Natural killer cell (primary cell): ENCODE measurements at regions of chr13 and their contacts with region 1.

Region 1: GRCh38 chr13:95676762-95677563 is at the start of gene DNAJC3:
- DNase-seq: peak; percentile 98 to 99
- ATAC-seq: peak; percentile 92 to 99 (median 93)
- H3K4me3 ChIP-seq: peak within 1 kb of the TSS; percentile 87
- H3K4me3 Mint-ChIP-seq: peak within 1 kb of the TSS; percentile 99
- H3K27ac ChIP-seq: peak within 1 kb of the TSS; percentile 83
- H3K27ac Mint-ChIP-seq: peak within 1 kb of the TSS; percentile 95 to 99
- H3K4me1 ChIP-seq: peaks cover 12% of the 10 kb centered on the region
- H3K4me1 Mint-ChIP-seq: peaks cover 39 to 59% of the 10 kb centered on the region in 2 donors
- H3K27me3 ChIP-seq: no peaks in the 10 kb centered on the region
- H3K27me3 Mint-ChIP-seq: no peaks in the 10 kb centered on the region
- CTCF ChIP-seq: no peak
- total RNA-seq, gene DNAJC3: 26.5 to 38.1 (median 29.0) TPM

Region 2: GRCh38 chr13:95714142-95714829 is 37.3 kb after region 1 on chr13:
- intact Hi-C with region 1: no loop called
- DNase-seq: no peak
- ATAC-seq: peak in 1 of 3 donors; percentile 37
- H3K4me3 ChIP-seq: no peak overlapping the region
- H3K4me3 Mint-ChIP-seq: no peak overlapping the region
- H3K27ac ChIP-seq: no peak overlapping the region
- H3K27ac Mint-ChIP-seq: no peak overlapping the region
- H3K4me1 ChIP-seq: no peaks in the 10 kb centered on the region
- H3K4me1 Mint-ChIP-seq: peaks cover 6 to 20% of the 10 kb centered on the region in 2 donors
- H3K27me3 ChIP-seq: no peaks in the 10 kb centered on the region
- H3K27me3 Mint-ChIP-seq: no peaks in the 10 kb centered on the region
- CTCF ChIP-seq: no peak

Region 3: GRCh38 chr13:95793018-95793555 is 116.1 kb after region 1 on chr13:
- intact Hi-C with region 1: loop called (anchors 10 kb)
- DNase-seq: no peak
- ATAC-seq: no peak
- H3K4me3 ChIP-seq: no peak overlapping the region
- H3K4me3 Mint-ChIP-seq: no peak overlapping the region
- H3K27ac ChIP-seq: no peak overlapping the region
- H3K27ac Mint-ChIP-seq: no peak overlapping the region
- H3K4me1 ChIP-seq: no peaks in the 10 kb centered on the region
- H3K4me1 Mint-ChIP-seq: peaks cover 15 to 19% of the 10 kb centered on the region in 2 donors
- H3K27me3 ChIP-seq: no peaks in the 10 kb centered on the region
- H3K27me3 Mint-ChIP-seq: no peaks in the 10 kb centered on the region
- CTCF ChIP-seq: no peak

Region 4: GRCh38 chr13:97432917-97433726 is 1756.2 kb after region 1 on chr13:
- intact Hi-C with region 1: loop called (anchors 5 kb)
- DNase-seq: peak; percentile 99 to 100
- ATAC-seq: peak; percentile 72 to 87 (median 76)
- H3K4me3 ChIP-seq: peak overlapping the region; percentile 91
- H3K4me3 Mint-ChIP-seq: peak overlapping the region; percentile 99
- H3K27ac ChIP-seq: peak overlapping the region; percentile 98
- H3K27ac Mint-ChIP-seq: peak overlapping the region; percentile 91 to 98
- H3K4me1 ChIP-seq: no peaks in the 10 kb centered on the region
- H3K4me1 Mint-ChIP-seq: peaks cover 36% of the 10 kb centered on the region in 2 donors
- H3K27me3 ChIP-seq: no peaks in the 10 kb centered on the region
- H3K27me3 Mint-ChIP-seq: peaks cover 0 to 10% of the 10 kb centered on the region in 2 donors
- CTCF ChIP-seq: no peak